CD8-positive, alpha-beta T cell (primary cell): ENCODE measurements at regions of chr2 and their contacts with region 1.

Region 1: DNA sequence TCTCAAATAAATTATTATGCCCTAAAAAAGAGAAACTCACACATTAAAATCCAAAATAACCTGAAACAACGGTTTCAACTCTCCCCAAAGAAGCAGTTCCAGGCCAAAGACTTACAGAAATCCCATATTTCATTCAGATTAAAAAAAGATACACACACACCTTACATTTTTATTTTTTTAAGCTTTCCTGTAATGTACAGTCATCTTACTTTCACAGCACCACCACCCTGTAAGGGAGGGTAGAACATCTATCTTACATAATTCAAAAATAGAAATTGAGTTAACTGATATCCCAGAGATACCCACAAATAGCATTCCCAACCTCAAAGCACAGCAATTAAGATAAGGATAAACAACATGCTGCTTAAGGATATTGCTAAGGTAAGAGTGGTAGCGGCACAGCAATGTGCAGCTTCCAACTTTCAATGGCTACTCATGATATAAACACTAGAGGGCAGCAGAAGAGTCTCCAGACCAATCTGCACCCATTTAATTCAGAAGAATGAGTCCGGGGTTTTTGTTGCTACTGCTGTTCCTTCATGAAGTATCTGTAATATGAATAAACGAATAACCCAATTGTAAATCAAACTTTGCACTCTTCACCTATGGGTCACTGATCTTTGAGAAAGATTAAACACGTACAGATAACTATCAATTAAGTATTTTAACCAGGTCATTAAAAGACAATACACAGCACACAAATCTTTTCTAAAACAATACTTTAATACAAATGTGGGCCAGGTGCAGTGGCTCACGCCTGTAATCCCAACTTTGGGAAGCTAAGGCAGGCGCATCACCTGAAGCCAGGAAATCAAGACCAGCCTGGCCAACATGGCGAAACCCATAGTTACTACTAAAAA is 11.3 kb downstream of the GFPT1 start:
- DNase-seq: peak in 2 of 9 experiments; percentile 52 to 55
- ATAC-seq: peak; percentile 73
- H3K4me3 ChIP-seq: no peak overlapping the region
- H3K4me3 Mint-ChIP-seq: no peak overlapping the region
- H3K27ac ChIP-seq: no peak overlapping the region
- H3K27ac Mint-ChIP-seq: no peak overlapping the region
- H3K4me1 ChIP-seq: no peaks in the 10 kb centered on the region
- H3K4me1 Mint-ChIP-seq: peaks cover 27% of the 10 kb centered on the region
- H3K27me3 ChIP-seq: no peaks in the 10 kb centered on the region
- H3K27me3 Mint-ChIP-seq: no peaks in the 10 kb centered on the region
- CTCF ChIP-seq: peak; percentile 66

Region 2: GRCh38 chr2:68698567-68699377 is 677.0 kb before region 1 on chr2:
- CTCF ChIA-PET with region 1: no interaction called
- POLR2A ChIA-PET with region 1: no interaction called
- intact Hi-C with region 1: no loop called
- DNase-seq: no peak
- ATAC-seq: no peak
- H3K4me3 ChIP-seq: no peak overlapping the region
- H3K4me3 Mint-ChIP-seq: no peak overlapping the region
- H3K27ac ChIP-seq: no peak overlapping the region
- H3K27ac Mint-ChIP-seq: no peak overlapping the region
- H3K4me1 ChIP-seq: no peaks in the 10 kb centered on the region
- H3K4me1 Mint-ChIP-seq: peaks cover 6% of the 10 kb centered on the region
- H3K27me3 ChIP-seq: no peaks in the 10 kb centered on the region
- H3K27me3 Mint-ChIP-seq: peaks cover 8% of the 10 kb centered on the region
- CTCF ChIP-seq: no peak

Region 3: GRCh38 chr2:69260666-69261065 is 115.1 kb before region 1 on chr2:
- CTCF ChIA-PET with region 1: no interaction called
- POLR2A ChIA-PET with region 1: no interaction called
- intact Hi-C with region 1: no loop called
- DNase-seq: no peak
- ATAC-seq: no peak
- H3K4me3 ChIP-seq: no peak overlapping the region
- H3K4me3 Mint-ChIP-seq: no peak overlapping the region
- H3K27ac ChIP-seq: no peak overlapping the region
- H3K27ac Mint-ChIP-seq: no peak overlapping the region
- H3K4me1 ChIP-seq: no peaks in the 10 kb centered on the region
- H3K4me1 Mint-ChIP-seq: no peaks in the 10 kb centered on the region
- H3K27me3 ChIP-seq: no peaks in the 10 kb centered on the region
- H3K27me3 Mint-ChIP-seq: peaks cover 31% of the 10 kb centered on the region
- CTCF ChIP-seq: no peak

Region 4: GRCh38 chr2:69509007-69509749 is 133.5 kb after region 1 on chr2:
- CTCF ChIA-PET with region 1: no interaction called
- POLR2A ChIA-PET with region 1: no interaction called
- intact Hi-C with region 1: loop called in 1 of 2 experiments (anchors 10 kb)
- DNase-seq: no peak
- ATAC-seq: no peak
- H3K4me3 ChIP-seq: no peak overlapping the region
- H3K4me3 Mint-ChIP-seq: no peak overlapping the region
- H3K27ac ChIP-seq: no peak overlapping the region
- H3K27ac Mint-ChIP-seq: peak overlapping the region; percentile 49
- H3K4me1 ChIP-seq: no peaks in the 10 kb centered on the region
- H3K4me1 Mint-ChIP-seq: peaks cover 6% of the 10 kb centered on the region
- H3K27me3 ChIP-seq: no peaks in the 10 kb centered on the region
- H3K27me3 Mint-ChIP-seq: no peaks in the 10 kb centered on the region
- CTCF ChIP-seq: no peak